Panc1 (cell line): ENCODE measurements at regions of chr12 and their contacts with region 1.

Region 1: GRCh38 chr12:113114447-113115178 is 20.9 kb downstream of the RASAL1 start:
- DNase-seq: no peak
- ATAC-seq: 0 out of 2 replicates have a peak, but pooled peaks have one; percentile 50
- H3K4me3 ChIP-seq: no peak overlapping the region
- H3K27ac ChIP-seq: no peak overlapping the region
- H3K4me1 ChIP-seq: no peaks in the 10 kb centered on the region
- H3K27me3 ChIP-seq: no peaks in the 10 kb centered on the region
- CTCF ChIP-seq: no peak

Region 2: GRCh38 chr12:113142173-113142885 is 27.7 kb after region 1 on chr12:
- CTCF ChIA-PET with region 1: no interaction called
- POLR2A ChIA-PET with region 1: no interaction called
- in situ Hi-C with region 1: no loop called
- intact Hi-C with region 1: no loop called
- DNase-seq: no peak
- ATAC-seq: 0 out of 2 replicates have a peak, but pooled peaks have one; percentile 54
- H3K4me3 ChIP-seq: no peak overlapping the region
- H3K27ac ChIP-seq: no peak overlapping the region
- H3K4me1 ChIP-seq: peaks cover 11% of the 10 kb centered on the region
- H3K27me3 ChIP-seq: no peaks in the 10 kb centered on the region
- CTCF ChIP-seq: no peak

Region 3: GRCh38 chr12:113152835-113153814 is 38.5 kb after region 1 on chr12:
- CTCF ChIA-PET with region 1: interaction called, 13 read pairs
- POLR2A ChIA-PET with region 1: no interaction called
- in situ Hi-C with region 1: no loop called
- intact Hi-C with region 1: no loop called
- DNase-seq: peak; percentile 47
- ATAC-seq: peak; percentile 92
- H3K4me3 ChIP-seq: peak overlapping the region; percentile 45 to 60
- H3K27ac ChIP-seq: no peak overlapping the region
- H3K4me1 ChIP-seq: peaks cover 12% of the 10 kb centered on the region; the same call in 1 of the 2 replicates
- H3K27me3 ChIP-seq: no peaks in the 10 kb centered on the region
- CTCF ChIP-seq: peak; percentile 88

Region 4: DNA sequence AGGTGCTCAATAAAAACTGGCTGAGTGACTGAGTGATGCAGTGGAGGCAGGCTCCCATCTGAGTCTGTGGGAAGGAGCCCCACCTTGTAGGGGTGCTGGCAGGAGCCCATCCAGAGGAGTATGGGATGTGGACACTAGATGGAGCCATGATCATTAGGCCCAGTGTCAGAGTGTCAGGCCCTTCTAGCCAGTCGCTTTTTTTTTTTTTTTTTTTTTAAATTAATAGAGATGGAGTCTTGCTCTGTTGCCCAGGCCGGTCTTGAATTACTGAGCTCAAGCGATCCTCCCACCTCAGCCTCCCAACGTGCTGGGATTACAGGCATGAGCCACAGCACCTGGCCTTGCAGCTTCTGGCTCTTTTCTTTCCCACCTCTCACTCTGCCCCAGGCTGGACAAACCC is 82.4 kb after region 1 on chr12:
- CTCF ChIA-PET with region 1: interaction called, 11 read pairs
- POLR2A ChIA-PET with region 1: no interaction called
- in situ Hi-C with region 1: no loop called
- intact Hi-C with region 1: no loop called
- DNase-seq: peak; percentile 67
- ATAC-seq: peak; percentile 81
- H3K4me3 ChIP-seq: no peak overlapping the region
- H3K27ac ChIP-seq: peak overlapping the region; percentile 40
- H3K4me1 ChIP-seq: peaks cover 36% of the 10 kb centered on the region
- H3K27me3 ChIP-seq: no peaks in the 10 kb centered on the region
- CTCF ChIP-seq: peak; percentile 91

Region 5: GRCh38 chr12:113261847-113262470 is 147.3 kb after region 1 on chr12:
- CTCF ChIA-PET with region 1: no interaction called
- POLR2A ChIA-PET with region 1: no interaction called
- in situ Hi-C with region 1: no loop called
- intact Hi-C with region 1: no loop called
- DNase-seq: no peak
- ATAC-seq: no peak
- H3K4me3 ChIP-seq: no peak overlapping the region
- H3K27ac ChIP-seq: no peak overlapping the region
- H3K4me1 ChIP-seq: no peaks in the 10 kb centered on the region
- H3K27me3 ChIP-seq: no peaks in the 10 kb centered on the region
- CTCF ChIP-seq: no peak